ENCODE measurements at regions of chr10 and their contacts with region 1.

Region 1: GRCh38 chr10:86945361-86946212 is 11.8 kb downstream of the MMRN2 start:
- DNase-seq: peak; percentile 26
- H3K4me3 Mint-ChIP-seq: no peak overlapping the region
- H3K27ac Mint-ChIP-seq: peak overlapping the region; percentile 11
- H3K4me1 Mint-ChIP-seq: peaks cover 37% of the 10 kb centered on the region
- H3K27me3 Mint-ChIP-seq: peaks cover 13% of the 10 kb centered on the region

Region 2: GRCh38 chr10:86775056-86775869 is 170.3 kb before region 1 on chr10:
- CTCF ChIA-PET with region 1: no interaction called
- DNase-seq: no peak
- H3K4me3 Mint-ChIP-seq: no peak overlapping the region
- H3K27ac Mint-ChIP-seq: no peak overlapping the region
- H3K4me1 Mint-ChIP-seq: no peaks in the 10 kb centered on the region
- H3K27me3 Mint-ChIP-seq: peaks cover 3% of the 10 kb centered on the region

Region 3: GRCh38 chr10:86888585-86889381 is 56.8 kb before region 1 on chr10:
- CTCF ChIA-PET with region 1: no interaction called
- DNase-seq: no peak
- H3K4me3 Mint-ChIP-seq: no peak overlapping the region
- H3K27ac Mint-ChIP-seq: peak overlapping the region; percentile 35
- H3K4me1 Mint-ChIP-seq: peaks cover 9% of the 10 kb centered on the region
- H3K27me3 Mint-ChIP-seq: no peaks in the 10 kb centered on the region

Region 4: DNA sequence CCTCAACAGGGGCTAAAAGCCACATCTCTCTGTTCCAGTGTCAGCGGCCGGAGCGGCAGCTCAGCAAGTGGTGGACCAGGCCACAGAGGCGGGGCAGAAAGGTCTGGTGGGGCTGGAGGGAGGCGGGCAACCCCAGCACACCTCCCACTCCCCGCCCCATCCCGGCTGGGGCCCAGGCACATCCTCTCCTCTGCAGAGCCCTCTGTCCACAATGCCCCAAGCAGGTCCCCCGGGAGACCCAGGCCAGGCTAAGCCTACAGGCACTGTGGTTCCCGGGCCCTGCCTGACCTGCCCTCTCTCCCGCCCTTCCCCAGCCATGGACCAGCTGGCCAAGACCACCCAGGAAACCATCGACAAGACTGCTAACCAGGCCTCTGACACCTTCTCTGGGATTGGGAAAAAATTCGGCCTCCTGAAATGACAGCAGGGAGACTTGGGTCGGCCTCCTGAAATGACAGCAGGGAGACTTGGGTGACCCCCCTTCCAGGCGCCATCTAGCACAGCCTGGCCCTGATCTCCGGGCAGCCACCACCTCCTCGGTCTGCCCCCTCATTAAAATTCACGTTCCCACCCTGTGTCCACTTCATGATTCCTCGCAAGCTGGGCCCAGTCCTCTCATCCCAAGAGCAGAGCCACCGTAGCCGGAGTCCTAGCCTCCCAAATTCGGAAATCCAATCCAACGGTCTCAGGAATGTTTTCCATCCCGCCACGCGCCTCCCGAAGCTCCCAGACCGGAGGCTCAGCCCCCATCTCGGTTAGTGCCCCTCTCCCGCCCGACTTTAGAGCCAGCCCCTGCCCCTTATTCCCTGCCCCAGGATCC is 24.8 kb after region 1 on chr10:
- CTCF ChIA-PET with region 1: interaction called, 46 read pairs
- DNase-seq: no peak
- H3K4me3 Mint-ChIP-seq: peak overlapping the region; percentile 65
- H3K27ac Mint-ChIP-seq: peak overlapping the region; percentile 75
- H3K4me1 Mint-ChIP-seq: peaks cover 43% of the 10 kb centered on the region
- H3K27me3 Mint-ChIP-seq: peaks cover 84% of the 10 kb centered on the region

Measured in activated naive CD4-positive, alpha-beta T cell treated with anti-CD3 and anti-CD28 coated beads, Interleukin-2, amount 10 ng/mL, durations not matched to agents 7 days and 5 days (primary cell).